ENCODE measurements at regions of chr10 and their contacts with region 1.

Region 1: GRCh38 chr10:124092860-124093773 is at the start of gene CHST15:
- DNase-seq: peak; percentile 46
- H3K4me3 ChIP-seq: peak within 1 kb of the TSS; percentile 47 to 70 (median 56)
- H3K27ac ChIP-seq: peak within 1 kb of the TSS; percentile 87 to 94 (median 89)
- H3K4me1 ChIP-seq: peaks cover 7 to 56% (median 31%) of the 10 kb centered on the region in 4 donors
- H3K27me3 ChIP-seq: peaks cover 71% of the 10 kb centered on the region
- CTCF ChIP-seq: peak in 1 of 5 experiments; percentile 8
- EP300 ChIP-seq: no peak
- POLR2A ChIP-seq: peak; percentile 57
- total RNA-seq, gene CHST15: 10.0 to 25.4 (median 16.0) TPM

Region 2: GRCh38 chr10:124005991-124006392 is 87.1 kb before region 1 on chr10:
- in situ Hi-C with region 1: no loop called
- intact Hi-C with region 1: loop called (anchors 5 kb)
- DNase-seq: peak; percentile 10
- H3K4me3 ChIP-seq: no peak overlapping the region
- H3K27ac ChIP-seq: peak overlapping the region; percentile 54 to 78 (median 73)
- H3K4me1 ChIP-seq: peaks cover 0 to 28% (median 12%) of the 10 kb centered on the region in 4 donors
- H3K27me3 ChIP-seq: no peaks in the 10 kb centered on the region
- CTCF ChIP-seq: no peak
- EP300 ChIP-seq: no peak
- POLR2A ChIP-seq: no peak

Measured in transverse colon (tissue), 4 donors.